Thyroid gland (tissue), 4 donors: ENCODE measurements at regions of chr5 and their contacts with region 1.

Region 1: DNA sequence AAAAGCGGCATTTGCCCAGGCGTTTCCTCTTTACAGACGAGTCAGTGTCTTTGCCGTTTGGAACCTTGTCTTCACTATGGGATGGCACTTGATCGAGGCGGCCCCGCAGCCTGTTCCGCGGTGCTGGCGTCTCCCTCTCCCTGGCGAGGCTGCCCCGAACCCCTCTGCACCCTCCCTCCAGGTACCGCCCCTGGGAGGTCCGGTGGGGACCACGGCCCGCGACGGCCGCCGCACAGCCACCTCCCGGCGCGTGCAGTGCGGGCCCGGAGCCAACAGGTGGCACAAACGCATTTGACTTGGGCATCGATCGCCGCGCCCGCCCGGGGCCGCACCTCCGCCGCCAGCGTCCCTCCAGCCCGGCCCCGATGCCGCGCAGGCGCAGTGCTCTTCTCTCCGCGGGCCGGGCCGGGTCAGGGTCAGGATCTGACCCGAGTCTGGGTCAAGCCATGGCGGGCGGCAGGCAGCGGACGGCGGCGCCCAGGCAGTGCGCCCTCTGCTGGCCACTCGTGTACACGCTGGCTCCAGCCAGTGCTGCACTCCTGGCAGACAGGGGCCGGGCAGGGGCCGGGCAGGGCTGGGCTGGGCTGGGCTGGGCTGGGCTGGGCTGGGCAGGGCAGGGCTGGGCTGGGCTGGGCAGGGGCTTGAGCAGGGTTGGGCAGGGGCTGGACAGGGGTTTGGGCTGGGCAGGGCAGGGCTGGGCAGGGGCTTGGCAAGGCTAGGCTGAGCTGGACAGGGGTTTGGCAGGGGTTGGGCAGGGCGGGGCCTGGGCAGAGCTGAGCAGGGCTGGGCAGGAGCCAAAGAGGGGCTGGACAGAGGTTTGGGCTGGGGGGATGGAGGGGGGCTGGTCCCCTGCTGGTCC is 155.8 kb upstream of the IRX4 start:
- DNase-seq: peak; percentile 61 to 64
- H3K4me3 ChIP-seq: peak overlapping the region in 2 of 3 donors; percentile 31 to 33
- H3K27ac ChIP-seq: no peak overlapping the region
- H3K4me1 ChIP-seq: peaks cover 0 to 5% of the 10 kb centered on the region in 2 donors
- H3K27me3 ChIP-seq: no peaks in the 10 kb centered on the region
- CTCF ChIP-seq: peak; percentile 32 to 89 (median 69)
- POLR2A ChIP-seq: no peak

Region 2: GRCh38 chr5:1666812-1667588 is 371.6 kb before region 1 on chr5:
- intact Hi-C with region 1: loop called (anchors 10 kb)
- DNase-seq: peak; percentile 53 to 56
- H3K4me3 ChIP-seq: peak overlapping the region in 1 of 3 donors; percentile 24
- H3K27ac ChIP-seq: no peak overlapping the region
- H3K4me1 ChIP-seq: peaks cover 0 to 11% of the 10 kb centered on the region in 2 donors
- H3K27me3 ChIP-seq: peaks cover 3% of the 10 kb centered on the region
- CTCF ChIP-seq: peak in 4 of 6 experiments; percentile 12 to 52 (median 46)
- POLR2A ChIP-seq: no peak

Region 3: GRCh38 chr5:1783216-1783554 is 255.4 kb before region 1 on chr5:
- intact Hi-C with region 1: no loop called
- DNase-seq: no peak
- H3K4me3 ChIP-seq: no peak overlapping the region
- H3K27ac ChIP-seq: no peak overlapping the region
- H3K4me1 ChIP-seq: no peaks in the 10 kb centered on the region
- H3K27me3 ChIP-seq: no peaks in the 10 kb centered on the region
- CTCF ChIP-seq: no peak
- POLR2A ChIP-seq: no peak

Region 4: DNA sequence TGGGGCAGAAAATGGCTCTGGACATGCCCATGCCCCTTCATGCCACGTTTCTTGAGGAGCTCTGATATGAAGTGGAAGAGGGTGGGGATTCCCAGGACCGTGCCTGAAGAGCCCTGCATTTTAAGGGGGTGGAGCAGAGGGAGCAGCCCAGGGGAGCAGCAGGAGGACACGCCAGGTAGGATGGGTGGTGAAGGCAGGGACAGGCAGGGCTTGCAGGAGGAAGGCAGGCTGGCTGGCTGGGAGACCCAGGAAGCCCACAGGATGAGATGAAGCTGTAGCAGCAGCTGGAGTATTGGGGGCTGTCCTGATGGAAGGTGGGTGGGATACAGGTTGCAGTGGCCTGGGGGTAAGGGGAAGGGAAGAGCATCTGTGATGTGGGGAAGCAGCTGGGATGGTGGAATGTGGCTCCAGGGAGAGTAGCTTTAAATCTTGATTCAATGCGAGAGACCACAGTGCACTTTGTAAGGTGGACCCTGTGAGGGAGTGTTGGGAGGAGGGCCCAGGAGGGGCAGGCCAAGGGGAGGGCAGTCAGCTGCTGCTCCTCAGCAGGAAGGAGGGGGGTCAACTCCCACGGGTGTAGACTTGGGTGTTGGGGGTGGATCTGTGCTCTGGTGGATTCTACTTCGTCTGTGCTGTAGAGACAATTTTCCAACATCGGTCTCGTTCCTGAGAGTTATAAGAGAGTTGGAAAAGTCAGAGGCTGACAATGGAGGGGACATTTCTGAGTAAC is 86.8 kb after region 1 on chr5:
- intact Hi-C with region 1: no loop called
- DNase-seq: no peak
- H3K4me3 ChIP-seq: no peak overlapping the region
- H3K27ac ChIP-seq: no peak overlapping the region
- H3K4me1 ChIP-seq: no peaks in the 10 kb centered on the region
- H3K27me3 ChIP-seq: no peaks in the 10 kb centered on the region
- CTCF ChIP-seq: no peak
- POLR2A ChIP-seq: no peak